Activated CD4-positive, alpha-beta T cell treated with anti-CD3 and anti-CD28 coated beads, Interleukin-2, amount 10 ng/mL, durations not matched to agents 24 days and 14 days (primary cell): ENCODE measurements at regions of chr7 and their contacts with region 1.

Region 1: DNA sequence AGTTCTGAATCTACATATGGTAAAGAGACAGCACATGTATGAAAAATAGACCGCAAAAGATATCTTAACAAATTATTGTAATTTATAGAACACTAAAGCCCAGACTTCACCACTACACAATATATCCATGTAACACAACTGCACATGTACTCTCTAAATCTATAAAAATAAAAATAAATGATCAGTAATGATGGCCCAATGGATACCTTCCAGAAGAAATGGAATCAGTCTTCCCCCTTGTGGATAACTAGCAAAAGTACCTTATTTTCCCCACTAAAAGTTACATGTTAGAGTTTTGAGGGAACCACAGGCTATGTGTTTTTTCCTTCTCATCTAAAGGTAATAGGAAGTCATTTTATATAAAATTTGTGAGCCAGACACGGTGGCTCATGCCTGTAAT is 25.7 kb downstream of the C7orf25 start:
- DNase-seq: no peak
- H3K4me3 Mint-ChIP-seq: no peak overlapping the region
- H3K27ac Mint-ChIP-seq: no peak overlapping the region
- H3K4me1 Mint-ChIP-seq: peaks cover 22% of the 10 kb centered on the region
- H3K27me3 Mint-ChIP-seq: peaks cover 7% of the 10 kb centered on the region

Region 2: DNA sequence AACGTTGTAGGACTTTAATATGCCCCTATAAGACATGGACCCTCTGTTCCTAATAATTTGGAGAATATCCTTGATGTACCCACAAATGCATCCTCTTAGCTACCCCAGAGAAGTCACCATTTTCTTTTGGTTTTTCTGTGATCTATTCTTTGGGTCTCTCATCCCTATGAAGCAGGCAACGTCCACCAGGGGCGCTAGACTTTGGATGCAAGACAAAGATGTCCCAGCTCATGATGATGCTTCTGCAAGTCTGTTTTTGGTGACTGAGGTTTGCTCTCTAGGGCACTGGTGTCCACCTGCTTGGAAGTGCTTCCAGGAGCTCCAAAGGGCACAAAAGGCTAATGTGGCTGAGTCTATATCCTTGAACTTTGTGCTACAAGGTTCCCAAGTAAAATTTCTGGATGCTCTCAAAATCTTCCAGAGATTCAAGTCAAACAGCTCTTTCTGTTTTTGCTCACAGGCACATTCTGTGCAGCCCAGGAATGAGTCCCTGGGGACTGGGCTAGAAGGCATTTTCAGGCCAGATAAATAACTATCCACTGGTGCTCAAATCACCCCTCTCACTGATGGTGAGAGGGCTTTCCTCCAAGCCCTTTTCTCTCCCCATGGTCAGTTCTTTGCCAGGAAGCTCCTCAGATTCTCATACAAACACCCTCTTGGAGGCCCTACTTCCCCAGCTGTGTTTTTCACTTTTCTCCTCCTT is 140.6 kb before region 1 on chr7:
- intact Hi-C with region 1: loop called (anchors 10 kb)
- DNase-seq: peak; percentile 63
- H3K4me3 Mint-ChIP-seq: no peak overlapping the region
- H3K27ac Mint-ChIP-seq: no peak overlapping the region
- H3K4me1 Mint-ChIP-seq: no peaks in the 10 kb centered on the region
- H3K27me3 Mint-ChIP-seq: no peaks in the 10 kb centered on the region

Region 3: GRCh38 chr7:42770106-42770505 is 116.0 kb before region 1 on chr7:
- intact Hi-C with region 1: no loop called
- DNase-seq: no peak
- H3K4me3 Mint-ChIP-seq: no peak overlapping the region
- H3K27ac Mint-ChIP-seq: no peak overlapping the region
- H3K4me1 Mint-ChIP-seq: no peaks in the 10 kb centered on the region
- H3K27me3 Mint-ChIP-seq: no peaks in the 10 kb centered on the region

Region 4: DNA sequence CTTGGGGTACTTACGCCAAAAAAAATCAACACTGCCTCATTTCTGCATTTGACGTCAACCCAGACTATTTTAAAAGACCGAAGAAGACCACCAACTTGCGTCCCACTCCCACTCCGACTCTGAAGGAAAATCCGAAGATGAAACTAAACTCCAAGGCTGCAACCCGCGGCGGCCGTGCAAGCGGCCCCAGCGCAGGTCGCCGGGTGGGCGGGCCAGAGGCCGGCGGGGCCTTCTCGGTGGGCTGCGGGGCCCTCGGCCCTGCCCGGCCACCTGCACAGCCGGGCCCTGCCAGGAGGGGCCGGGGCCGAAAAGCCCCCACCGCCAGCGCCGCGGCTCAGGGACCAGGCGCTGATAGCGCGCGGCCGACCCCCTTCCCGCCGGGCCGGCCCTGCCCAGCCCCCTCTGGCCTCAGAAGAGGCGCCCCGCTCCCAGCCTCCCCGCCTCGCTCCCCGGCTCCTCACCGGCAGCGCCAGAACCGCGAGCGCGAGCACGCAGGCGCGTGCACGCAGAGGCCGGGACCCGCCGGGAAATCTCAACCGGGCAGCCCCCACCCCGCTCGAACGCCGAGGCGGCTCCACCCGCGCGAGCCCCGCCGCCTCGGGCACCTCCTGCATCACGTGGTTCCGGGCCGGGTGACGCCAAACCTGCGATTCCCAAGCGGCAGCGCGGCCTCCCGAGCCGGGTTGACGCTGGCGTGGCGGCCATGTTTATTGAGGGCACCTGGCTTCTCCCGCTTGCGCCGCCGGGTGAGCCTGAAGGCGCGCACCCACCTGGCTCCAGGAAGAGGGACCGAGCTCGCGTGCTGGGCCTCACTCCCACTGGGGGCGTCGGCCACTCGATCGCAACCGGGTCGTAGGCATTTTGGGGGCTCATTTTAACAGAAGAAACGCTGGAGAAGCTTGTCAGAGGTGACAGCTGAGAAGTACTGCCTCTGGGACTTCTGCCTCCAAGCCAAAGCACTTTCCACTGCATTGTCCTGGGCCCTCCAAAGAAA is 25.6 kb after region 1 on chr7 and contains the start of gene C7orf25:
- intact Hi-C with region 1: loop called (anchors 1 kb)
- DNase-seq: peak; percentile 99
- H3K4me3 Mint-ChIP-seq: peak within 1 kb of the TSS; percentile 97
- H3K27ac Mint-ChIP-seq: peak within 1 kb of the TSS; percentile 94
- H3K4me1 Mint-ChIP-seq: peaks cover 65% of the 10 kb centered on the region
- H3K27me3 Mint-ChIP-seq: no peaks in the 10 kb centered on the region
- total RNA-seq, gene C7orf25: 2.1 and 3.9 TPM in 2 replicates